Common myeloid progenitor, CD34-positive (primary cell): ENCODE measurements at regions of chr2 and their contacts with region 1.

Region 1: GRCh38 chr2:217993817-217994463 is 8.9 kb downstream of the TNS1 start:
- DNase-seq: peak; percentile 58 to 77 (median 72)
- H3K4me3 ChIP-seq: no peak overlapping the region
- H3K27ac ChIP-seq: no peak overlapping the region
- H3K4me1 ChIP-seq: peaks cover 0 to 13% (median 10%) of the 10 kb centered on the region in 4 experiments
- H3K27me3 ChIP-seq: no peaks in the 10 kb centered on the region

Region 2: GRCh38 chr2:217959723-217960122 is 34.2 kb before region 1 on chr2:
- CTCF ChIA-PET with region 1: no interaction called
- POLR2A ChIA-PET with region 1: no interaction called
- DNase-seq: no peak
- H3K4me3 ChIP-seq: no peak overlapping the region
- H3K27ac ChIP-seq: no peak overlapping the region
- H3K4me1 ChIP-seq: no peaks in the 10 kb centered on the region
- H3K27me3 ChIP-seq: no peaks in the 10 kb centered on the region

Region 3: GRCh38 chr2:218003981-218004419 is 10.1 kb after region 1 on chr2:
- CTCF ChIA-PET with region 1: interaction called, 41 read pairs
- POLR2A ChIA-PET with region 1: no interaction called
- DNase-seq: no peak
- H3K4me3 ChIP-seq: no peak overlapping the region
- H3K27ac ChIP-seq: peak overlapping the region in 1 of 2 experiments; percentile 63
- H3K4me1 ChIP-seq: peaks cover 0 to 30% (median 19%) of the 10 kb centered on the region in 4 experiments
- H3K27me3 ChIP-seq: no peaks in the 10 kb centered on the region

Region 4: DNA sequence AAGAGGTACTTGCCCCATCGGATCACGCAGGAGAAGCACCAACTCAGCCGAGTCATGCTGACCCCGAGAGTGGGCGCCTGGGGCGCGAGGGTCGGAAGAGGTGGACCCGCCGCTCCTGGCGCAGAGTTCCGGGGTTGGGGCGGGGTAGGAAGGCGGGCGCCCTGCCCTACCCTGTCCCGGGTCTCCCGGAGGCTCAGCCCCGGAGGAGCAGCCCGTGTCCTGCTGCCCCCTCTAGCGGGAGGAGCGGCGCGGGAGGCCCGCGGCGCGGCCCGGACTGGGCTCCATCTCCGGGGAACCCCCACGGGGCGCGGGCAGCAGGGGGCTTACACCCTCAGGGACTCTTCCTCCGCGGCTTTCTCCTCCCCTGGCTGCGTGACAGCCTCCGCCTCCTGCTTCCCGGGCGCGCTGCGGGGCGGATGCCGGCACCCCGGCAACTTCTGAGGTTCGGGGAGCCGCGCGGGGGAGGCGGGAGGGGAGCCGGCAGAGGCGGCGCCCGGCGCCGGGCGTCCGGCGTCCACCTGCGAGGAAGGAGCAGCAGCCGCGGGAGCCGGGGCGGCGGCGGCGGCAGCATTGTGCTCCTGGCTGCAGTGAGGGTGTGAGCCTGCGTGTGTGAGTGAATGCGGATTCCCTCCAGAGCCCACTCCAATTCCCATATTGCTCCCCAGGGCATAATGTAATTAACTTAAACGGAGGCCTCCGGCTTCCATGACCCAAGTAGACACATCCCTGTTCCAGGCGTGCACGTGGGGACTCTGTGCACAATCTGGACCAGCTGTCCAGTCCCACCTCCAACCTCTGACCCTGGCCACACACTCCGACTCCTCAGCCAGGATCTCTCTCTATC is 16.4 kb after region 1 on chr2:
- CTCF ChIA-PET with region 1: interaction called, 41 read pairs
- POLR2A ChIA-PET with region 1: no interaction called
- DNase-seq: peak; percentile 54 to 70 (median 61)
- H3K4me3 ChIP-seq: peak overlapping the region; percentile 44 to 89 (median 73)
- H3K27ac ChIP-seq: no peak overlapping the region
- H3K4me1 ChIP-seq: peaks cover 4 to 40% (median 35%) of the 10 kb centered on the region in 4 experiments
- H3K27me3 ChIP-seq: no peaks in the 10 kb centered on the region